IMR-90 (cell line): ENCODE measurements at regions of chr6 and their contacts with region 1.

Region 1: DNA sequence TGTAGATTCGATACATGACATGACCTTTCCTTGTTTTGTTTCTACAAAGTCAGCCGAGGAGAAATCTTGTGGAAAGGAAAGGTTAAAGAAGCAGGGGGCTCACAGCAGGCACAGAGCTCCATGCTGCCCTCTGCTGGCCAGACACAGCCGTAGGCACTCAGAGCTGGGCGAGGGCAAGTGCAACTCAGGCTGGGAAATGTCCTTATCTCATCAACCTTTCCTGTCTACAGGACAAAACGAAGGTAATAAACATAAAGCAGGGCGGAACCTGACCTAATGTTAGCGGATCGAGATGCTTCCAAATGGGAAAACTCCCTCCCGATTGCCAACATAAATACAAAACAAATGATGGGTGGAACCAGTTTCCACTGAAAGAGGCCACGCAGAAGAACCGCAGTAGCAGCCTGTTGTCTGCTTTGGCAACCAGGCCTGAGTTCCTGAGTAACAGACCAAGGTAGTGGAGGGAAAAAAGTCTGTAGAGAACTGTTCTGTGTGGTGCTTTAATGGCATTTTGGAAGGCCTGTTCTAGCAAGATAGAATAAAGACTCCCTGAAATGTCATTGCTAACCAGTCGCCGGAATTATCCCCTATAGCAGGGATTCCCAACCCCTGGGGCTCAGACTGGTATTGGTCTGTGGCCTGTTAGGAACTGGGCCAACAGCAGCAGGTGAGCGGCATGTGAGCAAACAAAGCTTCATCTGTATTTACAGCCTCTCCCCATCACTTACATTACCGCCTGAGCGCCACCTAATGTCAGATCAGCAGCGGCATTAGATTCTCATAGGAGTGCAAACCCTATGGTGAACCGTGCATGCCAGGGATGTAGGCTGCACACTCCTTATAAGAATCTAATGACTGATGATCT is 85.2 kb downstream of the MBOAT1 start:
- DNase-seq: peak; percentile 44
- ATAC-seq: peak; percentile 88
- H3K4me3 ChIP-seq: no peak overlapping the region
- H3K27ac ChIP-seq: no peak overlapping the region
- H3K4me1 ChIP-seq: peaks cover 3% of the 10 kb centered on the region; the same call in 1 of the 2 replicates
- H3K27me3 ChIP-seq: no peaks in the 10 kb centered on the region
- CTCF ChIP-seq: peak; percentile 80
- POLR2A ChIP-seq: no peak
- RAD21 ChIP-seq: peak; percentile 49

Region 2: GRCh38 chr6:20092071-20092566 is 34.9 kb before region 1 on chr6:
- CTCF ChIA-PET with region 1: interaction called, 8 read pairs
- POLR2A ChIA-PET with region 1: no interaction called
- dilution Hi-C with region 1: no loop called
- in situ Hi-C with region 1: no loop called
- intact Hi-C with region 1: loop called (anchors 2 kb)
- DNase-seq: peak; percentile 59
- ATAC-seq: peak; percentile 70
- H3K4me3 ChIP-seq: no peak overlapping the region
- H3K27ac ChIP-seq: no peak overlapping the region
- H3K4me1 ChIP-seq: no peaks in the 10 kb centered on the region
- H3K27me3 ChIP-seq: no peaks in the 10 kb centered on the region
- CTCF ChIP-seq: peak; percentile 69
- POLR2A ChIP-seq: no peak
- RAD21 ChIP-seq: peak; percentile 72

Region 3: DNA sequence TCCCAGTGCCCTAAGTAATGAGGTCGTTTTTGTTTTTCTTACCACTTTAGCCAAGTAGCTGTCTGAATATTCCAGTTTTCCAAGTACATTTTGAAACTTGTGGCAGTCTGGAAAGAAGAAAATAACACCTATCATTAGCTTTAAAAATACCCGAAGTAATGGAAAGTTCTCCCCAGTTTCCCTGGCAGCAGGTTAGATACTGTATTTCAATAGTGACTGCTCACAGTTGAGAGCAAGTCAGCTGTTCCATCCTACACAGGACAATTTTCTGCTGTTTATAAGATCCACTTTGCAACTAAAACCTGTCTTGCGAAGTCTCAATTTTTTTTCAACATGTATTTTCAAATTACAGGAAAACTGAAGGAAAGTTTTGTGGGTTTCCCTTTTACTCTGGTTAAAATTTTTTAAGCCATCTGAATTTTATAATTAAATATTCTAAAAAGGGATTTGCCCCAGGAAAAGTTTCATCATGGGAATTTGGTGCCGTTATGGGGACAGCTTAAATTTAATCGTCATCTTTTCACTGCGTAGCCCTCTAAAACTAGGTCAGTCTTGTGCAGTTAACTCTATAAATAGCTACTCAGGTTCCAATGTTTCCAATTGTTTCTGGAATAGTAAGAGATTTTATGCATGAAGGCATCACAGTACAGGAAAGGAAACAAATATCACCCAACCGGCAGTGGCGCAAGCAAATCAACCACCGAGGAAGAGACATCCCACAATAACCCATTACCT is 11.6 kb before region 1 on chr6:
- CTCF ChIA-PET with region 1: interaction called, 10 read pairs
- POLR2A ChIA-PET with region 1: no interaction called
- dilution Hi-C with region 1: no loop called
- in situ Hi-C with region 1: no loop called
- intact Hi-C with region 1: no loop called
- DNase-seq: no peak
- ATAC-seq: no peak
- H3K4me3 ChIP-seq: no peak overlapping the region
- H3K27ac ChIP-seq: no peak overlapping the region
- H3K4me1 ChIP-seq: 0 out of 2 replicates have a peak, but pooled peaks cover 2% of the 10 kb centered on the region
- H3K27me3 ChIP-seq: no peaks in the 10 kb centered on the region
- CTCF ChIP-seq: no peak
- POLR2A ChIP-seq: no peak
- RAD21 ChIP-seq: no peak

Region 4: GRCh38 chr6:20212392-20213217 is 85.6 kb after region 1 on chr6 and contains the start of gene MBOAT1:
- CTCF ChIA-PET with region 1: interaction called, 4 read pairs
- POLR2A ChIA-PET with region 1: no interaction called
- dilution Hi-C with region 1: no loop called
- in situ Hi-C with region 1: no loop called
- intact Hi-C with region 1: loop called (anchors 1 kb)
- DNase-seq: peak; percentile 87
- ATAC-seq: peak; percentile 99
- H3K4me3 ChIP-seq: peak within 1 kb of the TSS; percentile 93
- H3K27ac ChIP-seq: peak within 1 kb of the TSS; percentile 65
- H3K4me1 ChIP-seq: peaks cover 6% of the 10 kb centered on the region; the same call in 1 of the 2 replicates
- H3K27me3 ChIP-seq: no peaks in the 10 kb centered on the region
- CTCF ChIP-seq: no peak; the same call in 1 of the 2 replicates
- POLR2A ChIP-seq: peak; percentile 48; the same call in 1 of the 2 replicates
- RAD21 ChIP-seq: no peak
- total RNA-seq, gene MBOAT1: 4.7 and 5.6 TPM in 2 replicates